ENCODE measurements at regions of chr4 and their contacts with region 1.

Region 1: DNA sequence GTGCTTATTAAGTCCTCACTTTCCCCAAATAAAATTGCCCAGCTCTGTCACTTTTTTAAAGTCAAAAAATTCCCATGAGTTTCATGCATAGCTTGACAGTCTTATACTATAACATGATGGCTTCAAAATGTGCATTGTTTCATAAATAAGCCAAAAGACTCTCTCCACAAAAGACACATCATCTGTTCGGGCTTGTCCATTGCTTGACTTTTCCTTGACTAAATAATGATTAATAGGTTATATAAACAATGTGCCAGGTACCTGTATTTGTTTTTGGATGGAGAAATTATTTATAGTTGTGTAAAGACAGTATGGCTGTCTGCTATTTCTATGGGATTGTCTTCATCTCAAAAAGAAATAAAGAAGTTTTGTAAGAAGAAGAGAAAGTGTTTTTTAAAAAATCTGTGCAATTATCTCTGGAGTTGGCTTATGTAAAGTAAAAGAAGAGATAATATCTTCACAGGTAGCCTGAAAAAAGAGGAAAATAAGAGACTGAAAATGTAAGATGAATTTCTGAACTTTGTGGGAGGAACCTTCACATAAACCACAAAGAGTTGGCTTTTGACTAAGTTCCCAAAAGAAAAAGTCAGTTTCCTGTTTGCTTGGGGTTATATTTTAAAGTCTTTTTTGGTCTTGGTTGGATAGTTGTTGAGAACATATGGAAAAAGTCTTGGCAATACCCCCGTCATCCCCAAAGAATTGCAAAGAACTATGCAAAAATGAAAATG is 329.0 kb upstream of the KLF3 start:
- DNase-seq: no peak
- ATAC-seq: no peak
- H3K4me3 ChIP-seq: no peak overlapping the region
- H3K27ac ChIP-seq: peak overlapping the region in 1 of 12 donors; percentile 42
- H3K4me1 ChIP-seq: peaks cover 0 to 42% (median 0%) of the 10 kb centered on the region in 12 donors
- H3K27me3 ChIP-seq: no peaks in the 10 kb centered on the region
- CTCF ChIP-seq: no peak
- POLR2A ChIP-seq: no peak

Region 2: GRCh38 chr4:38415682-38416081 is 80.7 kb after region 1 on chr4:
- intact Hi-C with region 1: loop called in 1 of 10 experiments (anchors 5 kb)
- DNase-seq: no peak
- ATAC-seq: no peak
- H3K4me3 ChIP-seq: no peak overlapping the region
- H3K27ac ChIP-seq: no peak overlapping the region
- H3K4me1 ChIP-seq: peaks cover 0 to 5% (median 0%) of the 10 kb centered on the region in 12 donors
- H3K27me3 ChIP-seq: no peaks in the 10 kb centered on the region
- CTCF ChIP-seq: no peak
- POLR2A ChIP-seq: no peak